ENCODE measurements at regions of chr2 and their contacts with region 1.

Region 1: GRCh38 chr2:3728104-3729054 is 25.0 kb downstream of the DCDC2C start:
- DNase-seq: no peak

Region 2: GRCh38 chr2:3827673-3828575 is 99.5 kb after region 1 on chr2:
- intact Hi-C with region 1: loop called (anchors 5 kb)
- DNase-seq: peak in 3 of 10 donors; percentile 20 to 37 (median 22)